OCI-LY7 (cell line): ENCODE measurements at regions of chr11 and their contacts with region 1.

Region 1: GRCh38 chr11:130916238-130916855 is at the start of gene SNX19:
- DNase-seq: peak; percentile 89
- H3K4me3 ChIP-seq: peak within 1 kb of the TSS; percentile 93
- H3K27ac ChIP-seq: no peak within 1 kb of the TSS
- H3K4me1 ChIP-seq: peaks cover 7% of the 10 kb centered on the region
- CTCF ChIP-seq: peak; percentile 80
- total RNA-seq, gene SNX19: 35.8 and 43.5 TPM in 2 replicates

Region 2: GRCh38 chr11:131370090-131370751 is 453.9 kb after region 1 on chr11 and contains the start of gene NTM:
- CTCF ChIA-PET with region 1: no interaction called
- POLR2A ChIA-PET with region 1: no interaction called
- intact Hi-C with region 1: loop called (anchors 10 kb)
- DNase-seq: no peak
- H3K4me3 ChIP-seq: no peak within 1 kb of the TSS
- H3K27ac ChIP-seq: no peak within 1 kb of the TSS
- H3K4me1 ChIP-seq: no peaks in the 10 kb centered on the region
- CTCF ChIP-seq: no peak
- total RNA-seq, gene NTM: not detected in 2 replicates